ENCODE measurements at regions of chrX and their contacts with region 1.

Region 1: GRCh38 chrX:123943488-123943887 is 18.0 kb upstream of the STAG2 start:
- DNase-seq: no peak
- ATAC-seq: no peak
- H3K4me3 ChIP-seq: no peak overlapping the region
- H3K27ac ChIP-seq: no peak overlapping the region
- H3K4me1 ChIP-seq: no peaks in the 10 kb centered on the region
- H3K27me3 ChIP-seq: no peaks in the 10 kb centered on the region
- CTCF ChIP-seq: no peak
- EP300 ChIP-seq: no peak
- POLR2A ChIP-seq: no peak
- RAD21 ChIP-seq: no peak

Region 2: GRCh38 chrX:123788744-123789143 is 154.7 kb before region 1 on chrX:
- CTCF ChIA-PET with region 1: no interaction called
- POLR2A ChIA-PET with region 1: no interaction called
- RAD21 ChIA-PET with region 1: no interaction called
- SMC1A ChIA-PET with region 1: no interaction called
- in situ Hi-C with region 1: no loop called
- intact Hi-C with region 1: loop called (anchors 5 kb)
- DNase-seq: no peak
- ATAC-seq: no peak
- H3K4me3 ChIP-seq: no peak overlapping the region
- H3K27ac ChIP-seq: no peak overlapping the region
- H3K4me1 ChIP-seq: no peaks in the 10 kb centered on the region
- H3K27me3 ChIP-seq: no peaks in the 10 kb centered on the region
- CTCF ChIP-seq: no peak
- EP300 ChIP-seq: no peak
- POLR2A ChIP-seq: no peak
- RAD21 ChIP-seq: no peak